Activated B cell treated with CpG ODN at 0.5 μM for 24 hours (primary cell): ENCODE measurements at regions of chr10 and their contacts with region 1.

Region 1: GRCh38 chr10:79286318-79286951 is 60.8 kb upstream of the PPIF start:
- DNase-seq: peak; percentile 81
- ATAC-seq: peak; percentile 89
- H3K4me3 Mint-ChIP-seq: peak overlapping the region; percentile 78
- H3K27ac Mint-ChIP-seq: peak overlapping the region; percentile 97
- H3K4me1 Mint-ChIP-seq: peaks cover 79% of the 10 kb centered on the region
- H3K27me3 Mint-ChIP-seq: no peaks in the 10 kb centered on the region
- CTCF ChIP-seq: no peak

Region 2: GRCh38 chr10:78302989-78303854 is 983.2 kb before region 1 on chr10:
- CTCF ChIA-PET with region 1: no interaction called
- POLR2A ChIA-PET with region 1: no interaction called
- intact Hi-C with region 1: loop called (anchors 1 kb)
- DNase-seq: peak; percentile 96
- ATAC-seq: peak; percentile 87
- H3K4me3 Mint-ChIP-seq: peak overlapping the region; percentile 92
- H3K27ac Mint-ChIP-seq: peak overlapping the region; percentile 93
- H3K4me1 Mint-ChIP-seq: peaks cover 47% of the 10 kb centered on the region
- H3K27me3 Mint-ChIP-seq: no peaks in the 10 kb centered on the region
- CTCF ChIP-seq: peak; percentile 44

Region 3: GRCh38 chr10:79242620-79243152 is 43.7 kb before region 1 on chr10:
- CTCF ChIA-PET with region 1: interaction called, 5 read pairs
- POLR2A ChIA-PET with region 1: interaction called, 350 read pairs
- intact Hi-C with region 1: loop called (anchors 1 kb)
- DNase-seq: peak; percentile 71
- ATAC-seq: peak; percentile 52
- H3K4me3 Mint-ChIP-seq: peak overlapping the region; percentile 84
- H3K27ac Mint-ChIP-seq: peak overlapping the region; percentile 50
- H3K4me1 Mint-ChIP-seq: peaks cover 57% of the 10 kb centered on the region
- H3K27me3 Mint-ChIP-seq: no peaks in the 10 kb centered on the region
- CTCF ChIP-seq: no peak

Region 4: DNA sequence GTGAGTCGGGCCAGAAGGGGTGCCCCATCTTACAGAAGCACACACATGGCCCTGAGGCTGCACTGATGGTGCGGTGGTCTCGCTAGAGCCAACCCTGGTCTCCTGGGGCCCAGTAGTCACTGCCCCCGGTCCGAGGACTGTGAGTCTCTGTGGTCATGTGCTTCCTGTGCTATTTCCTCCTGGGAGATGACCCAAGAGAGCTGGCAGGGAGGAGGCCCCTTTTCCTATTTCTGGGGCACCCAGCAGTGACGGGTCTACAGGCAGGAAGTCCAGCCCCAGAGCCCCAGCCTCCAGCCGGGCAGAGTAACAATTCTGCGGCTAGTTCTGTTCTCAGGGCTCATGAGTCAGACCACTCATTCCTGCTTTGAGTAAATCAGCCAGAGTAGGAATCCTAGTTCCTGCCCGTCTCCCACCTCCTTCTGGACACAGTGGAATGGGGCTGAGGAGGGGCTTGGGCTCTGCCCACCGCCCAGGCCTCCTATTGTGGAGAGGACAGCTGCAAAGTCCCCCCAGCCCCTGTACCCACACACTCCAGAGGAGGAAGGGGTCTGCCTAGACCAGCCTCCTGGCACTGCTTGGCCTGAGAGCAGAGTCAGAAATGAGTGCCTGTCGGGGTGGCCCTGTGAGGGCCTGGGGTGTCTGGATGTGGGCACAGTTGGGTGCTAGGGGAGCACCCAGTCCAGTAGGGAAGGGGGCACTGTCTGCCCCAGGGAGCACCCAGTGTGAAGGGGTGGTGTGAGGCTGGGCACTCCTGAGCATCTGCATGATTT is 19.7 kb before region 1 on chr10:
- CTCF ChIA-PET with region 1: interaction called, 4 read pairs
- POLR2A ChIA-PET with region 1: interaction called, 57 read pairs
- intact Hi-C with region 1: loop called (anchors 1 kb)
- DNase-seq: peak; percentile 40
- ATAC-seq: peak; percentile 68
- H3K4me3 Mint-ChIP-seq: peak overlapping the region; percentile 69
- H3K27ac Mint-ChIP-seq: peak overlapping the region; percentile 92
- H3K4me1 Mint-ChIP-seq: peaks cover 96% of the 10 kb centered on the region
- H3K27me3 Mint-ChIP-seq: no peaks in the 10 kb centered on the region
- CTCF ChIP-seq: no peak

Region 5: GRCh38 chr10:79331709-79332108 is 45.3 kb after region 1 on chr10:
- CTCF ChIA-PET with region 1: no interaction called
- POLR2A ChIA-PET with region 1: interaction called, 9 read pairs
- intact Hi-C with region 1: loop called (anchors 1 kb)
- DNase-seq: peak; percentile 57
- ATAC-seq: peak; percentile 93
- H3K4me3 Mint-ChIP-seq: peak overlapping the region; percentile 41
- H3K27ac Mint-ChIP-seq: peak overlapping the region; percentile 79
- H3K4me1 Mint-ChIP-seq: peaks cover 24% of the 10 kb centered on the region
- H3K27me3 Mint-ChIP-seq: no peaks in the 10 kb centered on the region
- CTCF ChIP-seq: no peak

Region 6: GRCh38 chr10:79358783-79359182 is 72.3 kb after region 1 on chr10:
- CTCF ChIA-PET with region 1: no interaction called
- POLR2A ChIA-PET with region 1: no interaction called
- intact Hi-C with region 1: no loop called
- DNase-seq: no peak
- ATAC-seq: no peak
- H3K4me3 Mint-ChIP-seq: no peak overlapping the region
- H3K27ac Mint-ChIP-seq: no peak overlapping the region
- H3K4me1 Mint-ChIP-seq: peaks cover 47% of the 10 kb centered on the region
- H3K27me3 Mint-ChIP-seq: no peaks in the 10 kb centered on the region
- CTCF ChIP-seq: no peak

Region 7: GRCh38 chr10:80196270-80196949 is 910.0 kb after region 1 on chr10:
- CTCF ChIA-PET with region 1: no interaction called
- POLR2A ChIA-PET with region 1: no interaction called
- intact Hi-C with region 1: loop called (anchors 2 kb)
- DNase-seq: peak; percentile 48
- ATAC-seq: peak; percentile 92
- H3K4me3 Mint-ChIP-seq: peak overlapping the region; percentile 67
- H3K27ac Mint-ChIP-seq: peak overlapping the region; percentile 94
- H3K4me1 Mint-ChIP-seq: peaks cover 88% of the 10 kb centered on the region
- H3K27me3 Mint-ChIP-seq: no peaks in the 10 kb centered on the region
- CTCF ChIP-seq: no peak